ENCODE measurements at regions of chr2 and their contacts with region 1.

Region 1: GRCh38 chr2:24971536-24972314 is at the start of gene DNAJC27:
- DNase-seq: peak; percentile 93 to 99 (median 97)
- ATAC-seq: peak; percentile 85
- H3K4me3 ChIP-seq: peak within 1 kb of the TSS; percentile 95
- H3K4me3 Mint-ChIP-seq: peak within 1 kb of the TSS; percentile 97
- H3K27ac ChIP-seq: peak within 1 kb of the TSS; percentile 98 to 99
- H3K27ac Mint-ChIP-seq: peak within 1 kb of the TSS; percentile 100
- H3K4me1 ChIP-seq: peaks cover 20% of the 10 kb centered on the region
- H3K4me1 Mint-ChIP-seq: peaks cover 32% of the 10 kb centered on the region
- H3K27me3 ChIP-seq: no peaks in the 10 kb centered on the region
- H3K27me3 Mint-ChIP-seq: no peaks in the 10 kb centered on the region
- CTCF ChIP-seq: no peak
- total RNA-seq, gene DNAJC27: 20.0 to 23.1 TPM

Region 2: DNA sequence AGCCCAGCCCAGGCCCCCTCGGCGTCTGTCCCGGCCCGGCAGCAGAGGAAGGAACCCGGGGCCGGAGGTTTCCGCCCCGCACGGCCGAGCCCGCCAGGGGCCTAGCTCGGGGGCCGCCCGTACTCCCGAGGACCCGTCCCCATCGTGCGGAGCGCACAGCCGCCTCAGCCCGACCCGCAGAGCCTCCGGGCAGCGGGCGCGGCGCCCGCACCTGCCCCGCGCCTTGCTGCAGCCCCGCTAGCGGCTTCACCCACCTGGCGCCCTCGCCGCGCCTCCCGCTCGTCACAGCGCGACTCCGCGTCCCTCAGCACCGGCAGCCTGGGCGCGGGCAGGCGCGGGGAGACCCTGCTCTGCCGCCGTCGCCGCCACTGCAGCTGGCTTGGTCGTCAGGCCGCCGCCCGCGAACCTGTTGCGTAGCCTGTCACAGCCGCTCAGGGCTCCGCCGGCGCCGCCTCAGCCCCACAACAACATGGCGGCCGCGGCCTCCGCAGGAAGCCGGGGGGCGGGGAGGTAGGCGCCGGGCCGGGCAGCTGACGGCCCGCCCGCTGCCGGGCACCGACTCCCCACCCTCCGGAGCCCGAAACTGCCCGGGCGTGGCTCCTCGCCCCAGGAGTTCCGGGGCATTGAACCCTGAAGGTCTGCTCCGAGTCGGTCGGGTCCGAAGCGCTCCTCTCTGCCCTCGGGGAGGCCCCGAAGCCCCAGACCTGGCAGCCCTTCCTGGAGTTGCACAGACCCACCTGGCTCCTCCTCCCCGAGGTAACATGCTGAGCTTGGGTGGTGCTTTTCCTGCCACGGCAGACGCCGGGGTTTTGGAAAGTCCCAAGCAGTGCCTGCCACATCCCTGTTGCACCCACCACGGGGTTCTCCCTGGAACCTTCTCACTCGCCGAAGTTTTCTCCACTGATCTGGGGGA is 611.4 kb before region 1 on chr2 and contains the start of gene ITSN2:
- CTCF ChIA-PET with region 1: no interaction called
- POLR2A ChIA-PET with region 1: no interaction called
- intact Hi-C with region 1: loop called in 1 of 2 experiments (anchors 1 kb)
- DNase-seq: peak; percentile 65 to 94 (median 75)
- ATAC-seq: peak; percentile 81
- H3K4me3 ChIP-seq: peak within 1 kb of the TSS; percentile 83
- H3K4me3 Mint-ChIP-seq: peak within 1 kb of the TSS; percentile 99
- H3K27ac ChIP-seq: peak within 1 kb of the TSS; percentile 83 to 93
- H3K27ac Mint-ChIP-seq: peak within 1 kb of the TSS; percentile 97
- H3K4me1 ChIP-seq: peaks cover 13% of the 10 kb centered on the region
- H3K4me1 Mint-ChIP-seq: peaks cover 40% of the 10 kb centered on the region
- H3K27me3 ChIP-seq: no peaks in the 10 kb centered on the region
- H3K27me3 Mint-ChIP-seq: no peaks in the 10 kb centered on the region
- CTCF ChIP-seq: no peak
- total RNA-seq, gene ITSN2: 75.4 to 77.1 TPM

Region 3: GRCh38 chr2:24792874-24793760 is 178.6 kb before region 1 on chr2 and contains the starts of genes CENPO and PTRHD1:
- CTCF ChIA-PET with region 1: interaction called, 3 read pairs
- POLR2A ChIA-PET with region 1: no interaction called
- intact Hi-C with region 1: loop called in 1 of 2 experiments (anchors 2 kb)
- DNase-seq: peak; percentile 91 to 97 (median 93)
- ATAC-seq: peak; percentile 96
- H3K4me3 ChIP-seq: peak within 1 kb of the TSS; percentile 88
- H3K4me3 Mint-ChIP-seq: peak within 1 kb of the TSS; percentile 97
- H3K27ac ChIP-seq: peak within 1 kb of the TSS; percentile 95 to 97
- H3K27ac Mint-ChIP-seq: peak within 1 kb of the TSS; percentile 99
- H3K4me1 ChIP-seq: peaks cover 13% of the 10 kb centered on the region
- H3K4me1 Mint-ChIP-seq: peaks cover 21% of the 10 kb centered on the region
- H3K27me3 ChIP-seq: no peaks in the 10 kb centered on the region
- H3K27me3 Mint-ChIP-seq: no peaks in the 10 kb centered on the region
- CTCF ChIP-seq: peak; percentile 60
- total RNA-seq, gene CENPO: 3.4 to 3.5 TPM
- total RNA-seq, gene PTRHD1: 15.3 to 15.7 TPM

Region 4: DNA sequence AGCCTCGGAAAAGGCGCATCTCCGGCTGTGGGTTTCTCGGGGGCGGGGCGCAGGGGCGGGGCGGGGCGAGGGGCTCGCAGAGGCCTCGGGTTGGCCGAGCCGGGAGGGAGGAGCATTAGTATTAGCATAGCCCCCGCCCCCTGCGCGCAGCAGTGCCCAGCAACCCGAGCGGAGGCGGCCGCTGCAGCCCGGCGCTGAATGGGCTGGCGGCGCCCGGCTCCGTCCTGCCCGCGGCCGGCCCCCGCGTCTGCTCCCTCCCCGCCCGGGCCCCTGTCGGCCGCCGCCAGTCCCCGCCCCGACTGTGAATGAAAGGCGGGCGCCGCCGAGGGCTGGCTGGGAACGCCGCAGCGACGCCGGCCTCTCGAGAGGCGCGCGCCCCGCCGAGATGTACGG is 70.2 kb after region 1 on chr2 and contains the start of gene EFR3B:
- CTCF ChIA-PET with region 1: interaction called, 5 read pairs
- POLR2A ChIA-PET with region 1: interaction called, 5 read pairs
- intact Hi-C with region 1: loop called (anchors 2 kb)
- DNase-seq: peak; percentile 74 to 95 (median 86)
- ATAC-seq: peak; percentile 91
- H3K4me3 ChIP-seq: peak within 1 kb of the TSS; percentile 58
- H3K4me3 Mint-ChIP-seq: peak within 1 kb of the TSS; percentile 90
- H3K27ac ChIP-seq: no peak within 1 kb of the TSS
- H3K27ac Mint-ChIP-seq: no peak within 1 kb of the TSS
- H3K4me1 ChIP-seq: peaks cover 22% of the 10 kb centered on the region
- H3K4me1 Mint-ChIP-seq: peaks cover 24% of the 10 kb centered on the region
- H3K27me3 ChIP-seq: peaks cover 38 to 39% of the 10 kb centered on the region in 2 experiments
- H3K27me3 Mint-ChIP-seq: peaks cover 40% of the 10 kb centered on the region
- CTCF ChIP-seq: no peak
- total RNA-seq, gene EFR3B: 0.11 TPM in 1 of 2 experiments, not detected in the other

Region 5: GRCh38 chr2:25201265-25201664 is 229.5 kb after region 1 on chr2:
- CTCF ChIA-PET with region 1: interaction called, 6 read pairs
- POLR2A ChIA-PET with region 1: no interaction called
- intact Hi-C with region 1: loop called (anchors 1 to 2 kb)
- DNase-seq: no peak
- ATAC-seq: no peak
- H3K4me3 ChIP-seq: no peak overlapping the region
- H3K4me3 Mint-ChIP-seq: no peak overlapping the region
- H3K27ac ChIP-seq: no peak overlapping the region
- H3K27ac Mint-ChIP-seq: no peak overlapping the region
- H3K4me1 ChIP-seq: peaks cover 15% of the 10 kb centered on the region
- H3K4me1 Mint-ChIP-seq: peaks cover 14% of the 10 kb centered on the region
- H3K27me3 ChIP-seq: no peaks in the 10 kb centered on the region
- H3K27me3 Mint-ChIP-seq: no peaks in the 10 kb centered on the region
- CTCF ChIP-seq: no peak

Region 6: DNA sequence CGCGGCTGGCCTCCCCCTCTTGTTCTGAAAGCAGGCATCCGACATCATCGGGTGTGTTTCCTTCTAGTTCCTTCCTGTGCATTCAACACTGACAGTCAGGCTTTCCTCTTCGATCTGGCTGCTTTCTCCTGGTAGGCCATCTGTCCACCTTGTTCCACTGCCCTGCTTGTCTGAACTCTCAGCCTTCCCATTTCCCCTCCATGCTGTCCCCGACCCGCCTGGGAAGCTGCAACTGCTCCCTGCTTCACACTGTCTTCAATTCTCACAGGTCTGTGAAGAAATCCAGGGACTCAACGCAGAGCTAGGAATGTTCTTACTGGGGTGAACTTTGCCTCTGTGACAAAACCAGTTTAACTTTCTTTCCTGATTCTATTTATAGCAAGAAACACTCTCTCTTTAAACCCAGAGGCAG is 967.5 kb after region 1 on chr2:
- CTCF ChIA-PET with region 1: no interaction called
- POLR2A ChIA-PET with region 1: no interaction called
- intact Hi-C with region 1: no loop called
- DNase-seq: no peak
- ATAC-seq: no peak
- H3K4me3 ChIP-seq: no peak overlapping the region
- H3K4me3 Mint-ChIP-seq: no peak overlapping the region
- H3K27ac ChIP-seq: no peak overlapping the region
- H3K27ac Mint-ChIP-seq: no peak overlapping the region
- H3K4me1 ChIP-seq: no peaks in the 10 kb centered on the region
- H3K4me1 Mint-ChIP-seq: no peaks in the 10 kb centered on the region
- H3K27me3 ChIP-seq: no peaks in the 10 kb centered on the region
- H3K27me3 Mint-ChIP-seq: no peaks in the 10 kb centered on the region
- CTCF ChIP-seq: no peak

Measured in CD4-positive, alpha-beta T cell (primary cell).